ENCODE measurements at regions of chr6 and their contacts with region 1.

Region 1: DNA sequence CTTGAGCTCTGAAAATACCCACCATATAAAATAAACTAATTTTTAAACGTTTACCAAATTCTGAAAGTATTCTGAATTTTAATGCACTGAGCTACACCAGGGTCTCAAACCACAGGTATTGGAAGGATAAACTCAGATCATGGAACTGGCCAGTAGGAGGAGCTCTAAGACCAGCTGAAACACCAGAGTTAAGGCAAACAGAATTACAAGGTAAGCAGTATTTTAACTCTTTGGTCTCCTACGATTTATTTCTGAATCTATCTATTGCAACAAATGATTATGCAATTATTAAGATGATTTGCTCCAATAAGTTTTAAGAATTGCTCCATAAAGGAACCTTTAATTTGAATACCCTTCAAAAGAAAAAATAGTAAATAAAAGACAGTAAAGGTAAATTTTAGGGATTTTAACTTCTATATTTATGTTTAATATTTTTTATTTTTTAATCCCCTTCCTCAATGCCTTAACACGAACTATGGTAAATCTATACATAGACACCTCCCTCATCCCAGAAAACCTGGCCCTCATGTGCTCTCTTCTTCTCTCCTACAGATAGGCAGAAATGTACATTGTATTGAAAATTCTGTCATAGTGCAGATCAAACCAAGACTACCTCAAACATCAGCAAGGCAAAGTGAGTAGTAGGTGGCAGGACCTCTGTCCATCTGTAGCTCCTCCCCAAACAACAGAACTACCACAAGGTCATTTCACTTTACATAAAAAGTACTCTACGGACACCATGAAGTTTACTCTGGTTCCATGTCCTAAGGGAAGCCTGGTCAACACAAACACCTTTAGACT is 58.4 kb downstream of the SMLR1 start:
- DNase-seq: peak in 1 of 2 donors; percentile 57
- ATAC-seq: peak; percentile 86
- H3K4me3 ChIP-seq: no peak overlapping the region
- H3K27ac ChIP-seq: no peak overlapping the region
- H3K4me1 ChIP-seq: no peaks in the 10 kb centered on the region
- H3K27me3 ChIP-seq: no peaks in the 10 kb centered on the region

Region 2: DNA sequence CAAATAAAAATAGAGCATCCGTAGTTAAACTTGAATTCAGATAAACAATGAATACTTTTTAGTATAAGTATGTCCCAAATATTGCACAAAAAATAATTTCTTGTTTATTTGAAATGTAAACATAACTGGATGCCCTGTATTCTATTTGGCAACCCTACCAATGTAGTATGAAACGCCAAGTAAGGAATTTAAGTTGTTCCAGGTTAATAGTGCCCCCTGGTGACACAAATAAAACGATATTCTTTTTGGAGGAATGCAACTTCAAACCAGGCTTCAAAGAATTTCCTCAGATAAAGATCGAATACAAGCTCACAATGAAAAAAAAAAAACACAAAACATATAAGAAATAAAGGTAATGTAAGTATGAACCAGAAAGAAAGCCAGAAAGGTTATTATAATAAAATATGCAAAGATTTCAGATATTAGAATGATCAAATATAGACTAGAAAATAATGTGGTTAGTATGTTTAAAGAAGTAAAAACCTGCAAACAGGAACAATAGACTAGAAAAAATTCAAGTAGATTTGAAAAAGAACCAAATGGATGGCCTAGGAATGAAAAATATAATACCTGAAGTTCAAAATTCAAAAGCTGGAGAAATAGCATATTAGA is 231.3 kb after region 1 on chr6:
- intact Hi-C with region 1: loop called (anchors 1 kb)
- DNase-seq: no peak
- ATAC-seq: no peak
- H3K4me3 ChIP-seq: no peak overlapping the region
- H3K27ac ChIP-seq: no peak overlapping the region
- H3K4me1 ChIP-seq: no peaks in the 10 kb centered on the region
- H3K27me3 ChIP-seq: no peaks in the 10 kb centered on the region